CD4-positive, alpha-beta memory T cell (primary cell): ENCODE measurements at regions of chr9 and their contacts with region 1.

Region 1: GRCh38 chr9:130029223-130029973 is 13.6 kb downstream of the FNBP1 start:
- DNase-seq: no peak
- H3K4me3 ChIP-seq: no peak overlapping the region
- H3K4me3 Mint-ChIP-seq: peak overlapping the region; percentile 68 to 79 (median 72)
- H3K27ac ChIP-seq: peak overlapping the region; percentile 77
- H3K27ac Mint-ChIP-seq: peak overlapping the region; percentile 58 to 99 (median 91)
- H3K4me1 ChIP-seq: peaks cover 94% of the 10 kb centered on the region
- H3K4me1 Mint-ChIP-seq: peaks cover 68 to 96% (median 82%) of the 10 kb centered on the region in 4 donors
- H3K27me3 ChIP-seq: no peaks in the 10 kb centered on the region
- H3K27me3 Mint-ChIP-seq: no peaks in the 10 kb centered on the region

Region 2: DNA sequence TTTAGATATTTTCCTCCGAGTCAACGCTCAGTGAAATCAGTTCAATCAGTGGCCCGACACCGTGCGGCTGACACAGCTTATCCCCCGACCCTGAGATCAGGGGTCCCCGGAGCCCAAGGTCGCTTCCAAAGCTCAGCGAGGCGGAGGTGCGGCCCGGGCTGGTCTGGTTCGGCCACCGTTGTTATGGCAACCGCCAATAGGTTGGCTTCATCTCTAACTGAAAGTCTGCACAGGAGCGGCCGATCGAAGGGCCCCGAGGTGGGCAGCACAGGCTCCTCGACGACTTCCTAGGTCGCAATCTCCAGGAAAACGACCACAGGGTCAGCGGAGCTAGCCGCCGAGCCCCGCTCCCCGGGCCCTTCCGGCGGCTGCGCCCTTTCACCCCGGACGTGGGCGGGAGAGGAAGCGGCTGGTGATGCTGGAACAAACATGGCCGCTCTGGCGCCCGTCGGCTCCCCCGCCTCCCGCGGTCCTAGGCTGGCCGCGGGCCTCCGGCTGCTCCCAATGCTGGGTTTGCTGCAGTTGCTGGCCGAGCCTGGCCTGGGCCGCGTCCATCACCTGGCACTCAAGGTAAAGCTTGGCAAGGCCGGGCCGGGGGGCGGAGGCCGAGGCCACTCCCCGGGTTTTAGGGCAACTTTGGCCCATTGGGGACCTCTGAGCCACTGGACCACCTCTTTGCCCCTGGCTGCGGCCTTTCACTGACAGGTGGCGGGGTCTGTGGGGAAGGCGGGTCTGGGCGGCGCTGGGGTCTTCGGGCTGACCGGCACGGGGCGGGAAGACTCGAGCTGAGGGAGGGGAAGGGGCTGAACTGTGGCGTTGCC is 24.3 kb after region 1 on chr9 and contains the start of gene GPR107:
- CTCF ChIA-PET with region 1: interaction called, 3 read pairs
- POLR2A ChIA-PET with region 1: interaction called, 14 read pairs
- intact Hi-C with region 1: no loop called
- DNase-seq: peak; percentile 71 to 80 (median 79)
- H3K4me3 ChIP-seq: peak within 1 kb of the TSS; percentile 67 to 98
- H3K4me3 Mint-ChIP-seq: peak within 1 kb of the TSS; percentile 90 to 95 (median 95)
- H3K27ac ChIP-seq: peak within 1 kb of the TSS; percentile 95
- H3K27ac Mint-ChIP-seq: peak within 1 kb of the TSS; percentile 91 to 97 (median 95)
- H3K4me1 ChIP-seq: peaks cover 29% of the 10 kb centered on the region
- H3K4me1 Mint-ChIP-seq: peaks cover 18 to 38% (median 28%) of the 10 kb centered on the region in 4 donors
- H3K27me3 ChIP-seq: no peaks in the 10 kb centered on the region
- H3K27me3 Mint-ChIP-seq: no peaks in the 10 kb centered on the region
- total RNA-seq, gene GPR107: 23.8 to 24.4 TPM